ENCODE measurements at regions of chr3 and their contacts with region 1.

Region 1: GRCh38 chr3:43286115-43286840 is at the start of gene SNRK:
- DNase-seq: peak; percentile 89 to 94 (median 90)
- H3K4me3 ChIP-seq: peak within 1 kb of the TSS; percentile 94
- H3K4me3 Mint-ChIP-seq: peak within 1 kb of the TSS; percentile 98 to 100 (median 99)
- H3K27ac ChIP-seq: peak within 1 kb of the TSS; percentile 82
- H3K27ac Mint-ChIP-seq: peak within 1 kb of the TSS; percentile 99 to 100 (median 100)
- H3K4me1 ChIP-seq: peaks cover 32% of the 10 kb centered on the region
- H3K4me1 Mint-ChIP-seq: peaks cover 32 to 38% (median 36%) of the 10 kb centered on the region in 3 donors
- H3K27me3 ChIP-seq: no peaks in the 10 kb centered on the region
- H3K27me3 Mint-ChIP-seq: peaks cover 0 to 1% of the 10 kb centered on the region in 2 donors
- total RNA-seq, gene SNRK: 34.2 to 35.9 TPM

Region 2: GRCh38 chr3:43126536-43126935 is 159.7 kb before region 1 on chr3:
- CTCF ChIA-PET with region 1: no interaction called
- POLR2A ChIA-PET with region 1: no interaction called
- DNase-seq: no peak
- H3K4me3 ChIP-seq: no peak overlapping the region
- H3K4me3 Mint-ChIP-seq: no peak overlapping the region
- H3K27ac ChIP-seq: no peak overlapping the region
- H3K27ac Mint-ChIP-seq: no peak overlapping the region
- H3K4me1 ChIP-seq: no peaks in the 10 kb centered on the region
- H3K4me1 Mint-ChIP-seq: no peaks in the 10 kb centered on the region
- H3K27me3 ChIP-seq: no peaks in the 10 kb centered on the region
- H3K27me3 Mint-ChIP-seq: peaks cover 8 to 35% of the 10 kb centered on the region in 2 donors

Region 3: DNA sequence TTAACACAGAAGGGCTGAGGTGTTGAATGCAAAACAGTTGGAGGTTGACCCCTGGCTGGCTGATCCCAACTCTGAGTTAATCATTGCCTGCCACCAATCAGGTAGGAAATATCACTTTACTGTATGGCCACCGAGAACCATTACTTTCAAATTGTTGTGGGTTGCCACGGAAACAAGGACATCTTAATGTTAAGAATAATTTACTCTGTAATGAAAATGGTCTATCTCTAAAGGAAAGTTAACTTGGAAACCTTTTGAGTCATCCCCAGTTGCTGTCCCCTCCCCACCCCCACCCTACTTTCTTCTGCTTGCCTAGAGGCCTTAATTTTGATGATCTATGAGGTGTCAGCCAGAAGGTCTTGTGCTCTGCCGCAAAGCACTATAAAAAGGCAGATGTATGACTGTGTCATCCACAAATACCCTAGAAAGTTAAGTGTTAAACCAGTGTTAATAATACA is 78.6 kb before region 1 on chr3:
- CTCF ChIA-PET with region 1: no interaction called
- POLR2A ChIA-PET with region 1: no interaction called
- DNase-seq: no peak
- H3K4me3 ChIP-seq: no peak overlapping the region
- H3K4me3 Mint-ChIP-seq: no peak overlapping the region
- H3K27ac ChIP-seq: no peak overlapping the region
- H3K27ac Mint-ChIP-seq: no peak overlapping the region
- H3K4me1 ChIP-seq: no peaks in the 10 kb centered on the region
- H3K4me1 Mint-ChIP-seq: no peaks in the 10 kb centered on the region
- H3K27me3 ChIP-seq: no peaks in the 10 kb centered on the region
- H3K27me3 Mint-ChIP-seq: peaks cover 0 to 6% of the 10 kb centered on the region in 2 donors

Region 4: GRCh38 chr3:43345877-43346276 is 59.6 kb after region 1 on chr3:
- CTCF ChIA-PET with region 1: interaction called, 12 read pairs
- POLR2A ChIA-PET with region 1: interaction called, 29 read pairs
- DNase-seq: no peak
- H3K4me3 ChIP-seq: no peak overlapping the region
- H3K4me3 Mint-ChIP-seq: peak overlapping the region; percentile 29 to 88 (median 59)
- H3K27ac ChIP-seq: no peak overlapping the region
- H3K27ac Mint-ChIP-seq: peak overlapping the region; percentile 90 to 99 (median 96)
- H3K4me1 ChIP-seq: peaks cover 80% of the 10 kb centered on the region
- H3K4me1 Mint-ChIP-seq: peaks cover 80 to 93% (median 89%) of the 10 kb centered on the region in 3 donors
- H3K27me3 ChIP-seq: no peaks in the 10 kb centered on the region
- H3K27me3 Mint-ChIP-seq: peaks cover 0 to 2% of the 10 kb centered on the region in 2 donors

Region 5: GRCh38 chr3:43363621-43364266 is 77.5 kb after region 1 on chr3:
- CTCF ChIA-PET with region 1: no interaction called
- POLR2A ChIA-PET with region 1: no interaction called
- DNase-seq: no peak
- H3K4me3 ChIP-seq: no peak overlapping the region
- H3K4me3 Mint-ChIP-seq: no peak overlapping the region
- H3K27ac ChIP-seq: no peak overlapping the region
- H3K27ac Mint-ChIP-seq: peak overlapping the region in 5 of 8 donors; percentile 54 to 93 (median 80)
- H3K4me1 ChIP-seq: no peaks in the 10 kb centered on the region
- H3K4me1 Mint-ChIP-seq: peaks cover 4 to 14% (median 9%) of the 10 kb centered on the region in 3 donors
- H3K27me3 ChIP-seq: no peaks in the 10 kb centered on the region
- H3K27me3 Mint-ChIP-seq: peaks cover 0 to 1% of the 10 kb centered on the region in 2 donors